ENCODE measurements at regions of chr11 and their contacts with region 1.

Region 1: GRCh38 chr11:77202941-77203900 is 75.2 kb downstream of the MYO7A start:
- DNase-seq: no peak
- H3K4me3 ChIP-seq: no peak overlapping the region
- CTCF ChIP-seq: no peak

Region 2: DNA sequence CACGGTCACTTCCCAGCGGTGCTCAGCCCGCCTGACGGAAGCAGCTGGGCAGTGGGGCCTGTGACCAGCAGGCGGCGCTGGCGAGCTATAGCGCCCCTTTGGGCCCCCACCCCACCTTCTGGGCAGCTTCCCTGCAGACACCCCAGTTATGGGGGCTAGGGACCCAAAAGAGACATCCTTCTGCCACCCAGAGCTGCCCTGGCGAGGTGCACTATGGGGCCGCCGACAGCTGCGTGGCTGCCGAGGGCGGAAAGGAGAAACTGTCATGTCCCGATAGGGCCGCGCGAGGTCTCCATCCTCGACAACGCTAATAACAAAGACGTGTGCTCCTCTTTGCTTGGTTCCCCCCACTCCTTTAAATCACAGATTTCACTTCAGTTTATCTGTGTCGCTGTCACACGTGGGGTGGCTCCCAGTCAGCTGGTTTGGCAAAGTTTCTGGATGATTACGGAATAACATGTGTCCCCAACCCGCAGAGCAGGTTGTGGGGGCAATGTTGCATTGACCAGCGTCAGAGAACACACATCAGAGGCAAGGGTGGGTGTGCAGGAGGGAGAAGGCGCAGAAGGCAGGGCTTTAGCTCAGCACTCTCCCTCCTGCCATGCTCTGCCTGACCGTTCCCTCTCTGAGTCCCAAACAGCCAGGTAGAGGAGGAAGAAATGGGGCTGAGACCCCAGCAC is 75.8 kb before region 1 on chr11:
- in situ Hi-C with region 1: no loop called
- DNase-seq: no peak
- H3K4me3 ChIP-seq: peak overlapping the region; percentile 40
- CTCF ChIP-seq: peak; percentile 99

Region 3: DNA sequence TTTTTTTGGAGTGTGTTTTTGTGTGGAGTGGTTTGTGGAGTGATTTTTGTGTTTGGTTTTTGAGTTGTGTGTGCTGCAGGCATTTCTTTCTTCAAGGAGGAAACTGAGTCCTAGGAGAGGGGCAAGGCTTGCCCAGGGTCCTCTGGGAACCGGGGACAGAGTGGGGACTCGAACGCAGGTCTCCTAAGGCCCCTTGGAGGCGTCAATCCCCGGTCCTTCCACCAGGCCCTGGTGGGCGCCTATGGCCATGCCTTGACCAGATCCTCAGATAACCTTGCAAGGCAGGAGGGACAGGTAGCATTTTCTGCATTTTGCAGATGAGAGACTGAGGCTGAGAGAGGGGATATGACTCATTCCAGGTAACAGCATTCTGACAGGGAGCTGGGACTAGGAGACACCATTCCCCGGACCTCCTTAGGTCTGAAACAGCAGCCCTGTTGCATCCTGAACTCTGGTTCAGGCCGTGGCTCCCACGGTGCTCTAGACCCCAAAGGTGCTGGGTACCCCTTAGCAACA is 36.1 kb before region 1 on chr11:
- in situ Hi-C with region 1: no loop called
- DNase-seq: no peak
- H3K4me3 ChIP-seq: no peak overlapping the region
- CTCF ChIP-seq: no peak

Region 4: DNA sequence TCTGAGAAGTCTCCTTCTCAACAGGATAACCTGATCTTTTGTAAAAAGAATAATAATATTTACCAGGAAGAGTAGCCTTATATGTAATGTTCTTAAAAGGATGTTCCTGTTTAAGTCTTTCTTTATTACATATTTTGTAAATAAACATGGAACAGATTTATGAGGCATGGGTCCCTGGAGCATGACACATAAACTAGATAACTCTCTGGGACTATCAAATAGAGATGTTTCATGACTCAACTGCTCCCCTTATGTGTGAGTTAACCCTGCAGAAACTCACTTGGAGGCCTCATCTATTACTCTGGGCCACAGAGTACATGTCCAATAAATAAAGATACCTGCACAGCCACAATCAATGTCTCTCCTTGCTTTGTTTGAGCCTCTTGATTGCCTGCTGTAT is 33.7 kb after region 1 on chr11:
- in situ Hi-C with region 1: loop called (anchors 5 kb)
- DNase-seq: no peak
- H3K4me3 ChIP-seq: no peak overlapping the region
- CTCF ChIP-seq: no peak

Region 5: GRCh38 chr11:77267962-77268361 is 64.7 kb after region 1 on chr11:
- in situ Hi-C with region 1: no loop called
- DNase-seq: no peak
- H3K4me3 ChIP-seq: no peak overlapping the region
- CTCF ChIP-seq: no peak

Region 6: DNA sequence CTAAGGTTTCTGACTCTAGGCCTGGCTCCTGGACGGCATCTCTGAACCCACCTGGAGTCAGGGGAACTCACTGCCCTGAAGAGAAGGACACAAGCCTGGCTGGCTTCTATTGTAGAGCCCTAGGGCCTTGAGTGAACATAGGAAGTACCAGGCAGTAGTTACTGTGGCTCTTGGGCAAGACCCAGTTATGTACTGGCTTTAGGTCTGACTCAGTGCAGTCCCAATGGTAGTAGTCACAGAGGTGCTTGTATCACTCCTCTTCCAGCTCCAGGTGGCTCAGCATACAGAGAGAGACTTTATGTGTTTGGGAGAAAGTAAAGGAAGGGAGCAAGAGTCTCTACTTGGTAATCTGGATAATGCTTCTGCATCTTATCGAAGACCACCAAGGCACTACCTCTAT is 284.6 kb after region 1 on chr11:
- in situ Hi-C with region 1: loop called (anchors 10 kb)
- DNase-seq: no peak
- H3K4me3 ChIP-seq: no peak overlapping the region
- CTCF ChIP-seq: no peak

Region 7: DNA sequence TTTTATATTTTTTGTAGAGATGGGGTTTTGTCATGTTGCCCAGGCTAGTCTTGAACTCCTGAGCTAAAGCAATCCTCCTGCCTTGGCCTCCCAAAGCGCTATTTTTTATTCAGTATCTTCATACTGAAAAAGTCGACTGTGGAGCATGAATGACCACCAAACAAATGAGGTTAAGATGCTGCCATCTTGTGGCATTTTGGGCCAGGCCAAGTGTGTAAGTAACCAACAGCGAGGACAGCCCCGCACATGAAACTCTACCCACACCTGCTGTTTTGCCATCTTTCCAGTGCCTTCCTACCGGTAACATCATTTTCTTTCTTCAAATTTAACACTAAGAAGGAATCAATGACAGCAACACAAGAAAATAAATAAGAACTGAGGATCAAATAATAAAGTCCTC is 354.3 kb after region 1 on chr11:
- in situ Hi-C with region 1: loop called (anchors 10 kb)
- DNase-seq: no peak
- H3K4me3 ChIP-seq: no peak overlapping the region
- CTCF ChIP-seq: peak; percentile 31

Measured in astrocyte of the cerebellum (primary cell).